Activated CD8-positive, alpha-beta T cell treated with anti-CD3 and anti-CD28 coated beads, Interleukin-2, amount 10 ng/mL, durations not matched to agents 7 days and 5 days (primary cell): ENCODE measurements at regions of chr3 and their contacts with region 1.

Region 1: GRCh38 chr3:129120254-129121004 is 1.2 kb downstream of the RAB43 start:
- DNase-seq: peak; percentile 98
- ATAC-seq: peak; percentile 69
- H3K4me3 Mint-ChIP-seq: peak overlapping the region; percentile 84
- H3K27ac Mint-ChIP-seq: peak overlapping the region; percentile 91
- H3K4me1 Mint-ChIP-seq: peaks cover 56% of the 10 kb centered on the region
- H3K27me3 Mint-ChIP-seq: no peaks in the 10 kb centered on the region

Region 2: GRCh38 chr3:129016356-129016719 is 104.1 kb before region 1 on chr3:
- CTCF ChIA-PET with region 1: interaction called, 19 read pairs
- POLR2A ChIA-PET with region 1: interaction called, 59 read pairs
- DNase-seq: peak; percentile 81
- ATAC-seq: peak; percentile 88
- H3K4me3 Mint-ChIP-seq: peak overlapping the region; percentile 66
- H3K27ac Mint-ChIP-seq: peak overlapping the region; percentile 91
- H3K4me1 Mint-ChIP-seq: peaks cover 37% of the 10 kb centered on the region
- H3K27me3 Mint-ChIP-seq: no peaks in the 10 kb centered on the region

Region 3: DNA sequence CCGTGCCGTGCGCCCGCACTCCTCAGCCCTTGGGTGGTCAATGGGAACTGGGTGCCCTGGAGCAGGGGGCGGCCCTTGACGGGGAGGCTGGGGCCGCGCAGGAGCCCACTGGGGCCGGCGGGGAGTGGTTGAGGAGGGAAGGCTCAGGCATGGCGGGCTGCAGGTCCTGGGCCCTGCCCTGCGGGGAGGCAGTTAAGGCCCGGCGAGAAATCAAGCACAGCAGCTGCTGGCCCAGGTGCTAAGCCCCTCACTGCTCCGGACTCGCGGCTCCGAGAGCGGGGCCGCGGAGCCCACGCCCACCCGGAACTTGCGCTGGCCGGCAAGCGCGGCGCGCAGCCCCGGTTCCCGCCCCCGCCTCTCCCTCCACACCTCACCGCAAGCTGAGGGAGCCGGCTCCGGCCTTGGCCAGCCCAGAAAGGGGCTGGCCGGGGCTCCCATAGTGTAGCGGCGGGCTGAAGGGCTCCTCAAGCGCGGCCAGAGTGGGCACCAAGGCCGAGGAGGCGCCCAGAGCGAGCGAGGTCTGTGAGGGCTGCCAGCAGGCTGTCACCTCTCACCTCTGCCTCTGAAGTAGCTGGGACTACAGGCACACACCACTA is 52.0 kb before region 1 on chr3:
- CTCF ChIA-PET with region 1: interaction called, 13 read pairs
- POLR2A ChIA-PET with region 1: interaction called, 55 read pairs
- DNase-seq: peak; percentile 30
- ATAC-seq: peak; percentile 77
- H3K4me3 Mint-ChIP-seq: peak overlapping the region; percentile 58
- H3K27ac Mint-ChIP-seq: peak overlapping the region; percentile 39
- H3K4me1 Mint-ChIP-seq: peaks cover 25% of the 10 kb centered on the region
- H3K27me3 Mint-ChIP-seq: peaks cover 2% of the 10 kb centered on the region

Region 4: DNA sequence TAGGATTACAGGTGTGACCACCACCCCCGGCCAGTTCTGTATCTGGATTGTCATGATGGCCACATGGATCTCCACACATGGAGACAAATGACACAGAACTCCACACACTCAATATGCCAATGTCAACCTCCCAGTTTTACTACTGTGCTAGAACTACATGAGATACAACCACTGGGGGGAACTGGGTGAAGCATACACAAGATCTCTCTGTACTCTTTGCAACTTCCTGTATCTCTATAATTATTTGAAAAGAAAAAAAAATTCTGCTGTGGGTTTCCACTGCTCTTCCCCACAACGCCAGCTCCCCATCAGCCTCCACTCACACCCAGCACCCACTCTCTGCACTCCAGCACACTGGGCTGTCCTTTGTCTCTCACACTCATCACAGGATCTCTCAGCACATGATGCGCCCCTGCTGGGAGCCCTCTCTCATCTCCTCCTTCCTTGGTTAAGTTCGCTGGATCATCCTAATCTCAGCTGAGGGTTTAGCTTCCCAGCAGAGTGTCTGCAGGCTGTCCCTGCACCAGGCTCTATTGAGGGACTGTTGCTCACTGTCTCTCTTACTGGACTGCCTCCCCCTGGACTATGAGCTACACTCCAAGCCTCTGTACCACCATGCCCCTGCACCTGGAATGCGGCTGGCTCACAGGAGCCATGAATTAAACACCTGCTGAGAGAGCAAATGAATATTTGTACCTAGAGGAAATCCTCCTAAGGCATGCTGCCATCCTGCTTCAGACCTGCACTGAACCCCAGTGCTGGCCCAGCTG is 11.9 kb after region 1 on chr3:
- CTCF ChIA-PET with region 1: interaction called, 4 read pairs
- POLR2A ChIA-PET with region 1: interaction called, 24 read pairs
- DNase-seq: no peak
- ATAC-seq: peak; percentile 31
- H3K4me3 Mint-ChIP-seq: no peak overlapping the region
- H3K27ac Mint-ChIP-seq: peak overlapping the region; percentile 48
- H3K4me1 Mint-ChIP-seq: peaks cover 11% of the 10 kb centered on the region
- H3K27me3 Mint-ChIP-seq: no peaks in the 10 kb centered on the region

Region 5: DNA sequence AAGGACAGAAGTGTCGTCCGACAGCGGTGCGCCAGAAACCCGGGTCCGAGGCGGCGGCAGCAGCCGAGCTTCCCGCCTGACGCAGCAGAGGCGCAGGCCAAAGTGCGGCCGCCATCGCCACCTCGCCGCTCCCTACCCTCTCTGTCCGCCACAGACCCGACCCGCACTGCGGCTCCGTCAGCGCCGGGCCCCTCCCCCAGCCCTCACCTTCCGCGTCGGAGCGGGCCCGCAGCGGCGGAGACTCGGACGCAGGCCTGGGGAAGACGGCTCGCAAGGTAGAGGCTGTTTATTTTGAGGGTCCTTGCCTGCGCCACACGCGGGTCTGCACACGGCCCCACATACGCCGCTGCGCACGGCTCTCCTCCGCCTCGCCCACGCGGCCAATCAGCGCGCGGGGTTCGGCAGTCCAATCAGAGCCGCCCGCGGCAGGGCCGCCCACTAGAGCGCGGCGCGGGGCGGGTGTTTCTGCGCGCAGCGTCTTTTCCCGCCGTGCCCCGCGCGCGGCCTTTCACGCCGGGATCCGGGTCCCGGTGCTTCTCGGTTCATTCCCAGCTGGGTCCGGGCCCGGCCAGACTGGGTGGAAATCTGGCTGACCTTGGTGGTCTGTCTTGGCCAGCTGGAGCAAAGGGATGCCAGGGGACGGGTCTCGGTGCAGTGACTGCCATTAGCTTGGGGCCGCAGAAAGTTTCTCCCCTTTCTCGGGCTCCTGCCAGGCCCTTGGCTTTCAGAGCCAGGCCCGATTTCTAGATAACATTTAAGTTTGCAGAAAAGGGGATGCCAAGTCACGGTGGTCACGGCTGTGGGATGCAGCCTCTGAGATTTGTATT is 63.4 kb after region 1 on chr3 and contains the start of gene CNBP:
- CTCF ChIA-PET with region 1: no interaction called
- POLR2A ChIA-PET with region 1: interaction called, 43 read pairs
- DNase-seq: peak; percentile 94
- ATAC-seq: peak; percentile 98
- H3K4me3 Mint-ChIP-seq: peak within 1 kb of the TSS; percentile 92
- H3K27ac Mint-ChIP-seq: peak within 1 kb of the TSS; percentile 98
- H3K4me1 Mint-ChIP-seq: peaks cover 45% of the 10 kb centered on the region
- H3K27me3 Mint-ChIP-seq: no peaks in the 10 kb centered on the region
- total RNA-seq, gene CNBP: 263 to 273 TPM